ENCODE measurements at regions of chr17 and their contacts with region 1.

Region 1: DNA sequence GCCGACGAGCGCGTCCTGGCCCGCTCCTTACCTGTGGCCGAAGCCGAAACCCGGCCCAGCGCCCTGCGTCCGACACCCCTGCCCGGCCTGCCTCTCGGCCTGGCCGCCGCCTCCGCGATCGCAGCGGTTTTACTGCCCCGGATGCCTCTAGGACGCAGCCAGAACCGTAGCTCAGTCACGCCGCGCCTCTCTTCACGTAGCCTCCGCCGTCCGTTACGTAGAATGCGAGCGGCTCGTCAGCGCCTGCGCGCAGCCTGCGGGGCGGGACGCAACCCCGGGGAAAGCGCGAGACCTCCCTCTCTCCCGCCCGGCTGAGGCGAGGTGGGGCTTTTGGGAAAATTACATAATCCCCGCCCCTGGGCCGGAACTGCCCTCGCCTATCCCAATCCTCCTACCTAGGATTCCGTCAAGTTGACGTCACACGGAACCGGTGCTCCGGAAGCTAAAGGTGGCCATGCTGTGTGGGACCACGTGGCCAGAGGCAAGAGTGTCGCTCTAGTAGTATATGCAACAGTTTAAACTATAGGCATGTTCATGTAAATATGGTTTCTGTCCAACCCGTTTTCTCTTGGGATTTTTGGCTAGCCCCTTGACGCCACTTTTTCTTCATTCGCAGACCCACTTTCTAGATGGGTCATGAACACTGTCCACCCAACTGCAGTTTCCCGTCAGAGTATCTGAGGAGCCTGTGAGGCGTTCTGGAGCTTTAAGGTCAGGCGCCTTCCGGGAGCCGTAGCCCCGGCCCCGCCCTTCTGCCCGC is at the start of gene CCDC47:
- DNase-seq: peak; percentile 98
- ATAC-seq: peak; percentile 90
- H3K4me3 ChIP-seq: peak within 1 kb of the TSS; percentile 100
- H3K27ac ChIP-seq: peak within 1 kb of the TSS; percentile 84
- H3K4me1 ChIP-seq: peaks cover 3% of the 10 kb centered on the region
- H3K27me3 ChIP-seq: no peaks in the 10 kb centered on the region
- CTCF ChIP-seq: no peak
- EP300 ChIP-seq: peak in 1 of 2 experiments; percentile 52; a peak in 1 of 4 replicates
- POLR2A ChIP-seq: peak; percentile 96
- RAD21 ChIP-seq: no peak
- polyA plus RNA-seq, gene CCDC47: 13.6 to 17.4 TPM

Region 2: DNA sequence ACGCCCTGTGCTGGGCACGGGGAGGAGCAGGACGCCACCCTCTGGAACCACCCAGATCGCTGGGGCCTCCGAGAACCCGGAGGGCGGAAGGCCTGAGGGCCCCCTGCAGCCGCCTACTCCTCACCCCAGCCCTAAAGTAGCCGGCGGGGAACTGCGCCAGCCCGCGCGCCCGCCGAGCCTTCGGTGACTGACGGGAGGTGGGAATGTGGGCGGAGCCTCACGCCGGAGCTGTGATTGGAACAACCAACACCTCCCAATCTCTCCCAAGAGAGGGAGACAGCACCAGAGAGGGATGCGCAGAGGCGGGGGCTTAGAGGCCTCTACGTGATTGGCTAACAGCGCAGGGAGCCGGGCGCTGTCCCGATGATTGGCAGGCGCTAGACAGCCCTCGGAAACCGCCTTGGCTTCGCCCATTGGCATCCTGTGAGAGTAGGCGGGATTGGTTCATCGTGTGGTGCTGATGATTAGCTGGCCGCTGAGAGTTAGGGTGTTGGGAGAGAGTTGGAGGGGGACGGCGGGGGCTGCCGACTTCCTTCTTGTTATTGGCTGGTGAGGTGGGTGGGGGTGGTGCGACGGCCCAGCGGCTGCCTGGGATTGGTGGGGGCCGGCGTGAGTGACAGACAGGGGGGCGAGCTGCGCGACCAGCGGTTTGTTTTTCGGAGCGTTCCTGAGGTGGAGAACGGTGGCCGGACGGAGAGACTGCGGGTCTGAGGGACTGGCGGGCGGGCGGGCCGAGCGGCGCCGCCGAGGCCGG is 151.6 kb before region 1 on chr17 and contains the start of gene MAP3K3:
- CTCF ChIA-PET with region 1: interaction called, 3 read pairs
- POLR2A ChIA-PET with region 1: interaction called, 7 read pairs
- RAD21 ChIA-PET with region 1: interaction called, 4 read pairs
- SMC1A ChIA-PET with region 1: no interaction called
- in situ Hi-C with region 1: no loop called
- intact Hi-C with region 1: loop called (anchors 10 kb)
- DNase-seq: peak; percentile 99
- ATAC-seq: peak; percentile 94
- H3K4me3 ChIP-seq: peak within 1 kb of the TSS; percentile 99
- H3K27ac ChIP-seq: peak within 1 kb of the TSS; percentile 67
- H3K4me1 ChIP-seq: peaks cover 5% of the 10 kb centered on the region; the same call in 1 of the 2 replicates
- H3K27me3 ChIP-seq: no peaks in the 10 kb centered on the region
- CTCF ChIP-seq: 0 out of 6 replicates have a peak, but pooled peaks of 1 of the 3 experiments have one; percentile 17
- EP300 ChIP-seq: no peak
- POLR2A ChIP-seq: peak; percentile 92
- RAD21 ChIP-seq: no peak
- polyA plus RNA-seq, gene MAP3K3: 1.6 to 2.0 TPM

Region 3: GRCh38 chr17:63741221-63742049 is 32.1 kb before region 1 on chr17 and contains the start of gene STRADA:
- CTCF ChIA-PET with region 1: interaction called, 8 read pairs
- POLR2A ChIA-PET with region 1: interaction called, 49 read pairs
- RAD21 ChIA-PET with region 1: interaction called, 20 read pairs
- SMC1A ChIA-PET with region 1: interaction called, 9 read pairs
- in situ Hi-C with region 1: no loop called
- intact Hi-C with region 1: loop called (anchors 1 kb)
- DNase-seq: peak; percentile 95
- ATAC-seq: peak; percentile 90
- H3K4me3 ChIP-seq: peak within 1 kb of the TSS; percentile 96
- H3K27ac ChIP-seq: peak within 1 kb of the TSS; percentile 97
- H3K4me1 ChIP-seq: peaks cover 11% of the 10 kb centered on the region
- H3K27me3 ChIP-seq: no peaks in the 10 kb centered on the region
- CTCF ChIP-seq: no peak
- EP300 ChIP-seq: peak; percentile 55 to 74; a peak in 3 of 4 replicates
- POLR2A ChIP-seq: peak; percentile 98
- RAD21 ChIP-seq: no peak
- polyA plus RNA-seq, gene STRADA: 13.3 to 15.6 TPM

Region 4: GRCh38 chr17:63785556-63785955 is 12.0 kb after region 1 on chr17:
- CTCF ChIA-PET with region 1: interaction called, 4 read pairs
- POLR2A ChIA-PET with region 1: interaction called, 49 read pairs
- RAD21 ChIA-PET with region 1: interaction called, 7 read pairs
- SMC1A ChIA-PET with region 1: interaction called, 10 read pairs
- in situ Hi-C with region 1: no loop called
- intact Hi-C with region 1: no loop called
- DNase-seq: no peak
- ATAC-seq: no peak
- H3K4me3 ChIP-seq: no peak overlapping the region
- H3K27ac ChIP-seq: no peak overlapping the region
- H3K4me1 ChIP-seq: peaks cover 8% of the 10 kb centered on the region; the same call in 1 of the 2 replicates
- H3K27me3 ChIP-seq: no peaks in the 10 kb centered on the region
- CTCF ChIP-seq: no peak
- EP300 ChIP-seq: no peak
- POLR2A ChIP-seq: no peak
- RAD21 ChIP-seq: no peak

Region 5: DNA sequence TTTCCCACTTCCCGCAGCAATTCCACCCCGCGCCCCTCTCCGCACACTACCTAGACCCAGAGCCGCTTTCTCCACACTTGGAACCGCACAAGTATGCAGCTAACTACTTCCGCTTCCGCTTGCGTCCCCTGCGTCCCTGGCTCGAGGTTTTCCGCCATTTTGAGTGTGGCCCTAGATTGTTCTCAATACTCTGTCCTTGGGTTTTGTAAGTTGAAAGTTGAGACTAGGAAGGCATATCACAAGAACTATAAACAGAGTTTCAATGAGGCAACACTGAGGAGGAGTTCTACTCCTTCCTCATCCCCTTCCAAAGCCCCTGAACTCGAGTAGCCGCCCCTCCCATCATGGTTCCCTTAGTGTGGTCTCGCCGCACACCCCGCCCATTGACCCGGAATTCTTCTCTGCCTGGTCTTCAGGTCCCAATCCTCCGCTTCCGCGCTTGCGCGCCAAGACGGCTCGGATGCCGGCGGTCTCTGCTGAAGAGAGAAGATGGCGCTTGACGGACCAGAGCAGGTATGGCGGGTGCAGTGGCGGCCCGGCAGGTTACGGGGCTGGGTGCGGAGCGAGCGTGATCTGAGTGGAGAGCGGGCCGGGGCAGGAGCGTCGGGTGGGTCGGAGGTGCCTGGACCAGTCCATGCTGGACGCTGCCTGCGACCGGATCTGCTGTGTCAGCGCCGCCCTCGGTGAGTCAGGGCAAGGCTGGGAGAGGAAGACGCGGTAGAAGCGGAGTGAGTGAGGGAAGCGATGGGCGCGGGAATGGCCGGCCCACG is 53.6 kb after region 1 on chr17 and contains the starts of genes FTSJ3 and PSMC5:
- CTCF ChIA-PET with region 1: interaction called, 5 read pairs
- POLR2A ChIA-PET with region 1: interaction called, 22 read pairs
- RAD21 ChIA-PET with region 1: interaction called, 3 read pairs
- SMC1A ChIA-PET with region 1: interaction called, 12 read pairs
- in situ Hi-C with region 1: no loop called
- intact Hi-C with region 1: loop called (anchors 1 kb)
- DNase-seq: peak; percentile 84
- ATAC-seq: peak; percentile 95
- H3K4me3 ChIP-seq: peak within 1 kb of the TSS; percentile 83
- H3K27ac ChIP-seq: peak within 1 kb of the TSS; percentile 95
- H3K4me1 ChIP-seq: peaks cover 17% of the 10 kb centered on the region
- H3K27me3 ChIP-seq: no peaks in the 10 kb centered on the region
- CTCF ChIP-seq: peak; percentile 60 to 73 (median 61)
- EP300 ChIP-seq: no peak
- POLR2A ChIP-seq: peak; percentile 99
- RAD21 ChIP-seq: no peak
- polyA plus RNA-seq, gene FTSJ3: 17.2 to 34.2 TPM
- polyA plus RNA-seq, gene PSMC5: 115 to 266 TPM